Mammary epithelial cell (primary cell): ENCODE measurements at regions of chr1 and their contacts with region 1.

Region 1: GRCh38 chr1:63773815-63774616 is at the start of gene ROR1:
- DNase-seq: peak; percentile 82
- H3K4me3 ChIP-seq: peak within 1 kb of the TSS; percentile 87 to 93 (median 90)
- H3K27ac ChIP-seq: peak within 1 kb of the TSS; percentile 48
- H3K4me1 ChIP-seq: peaks cover 29% of the 10 kb centered on the region
- H3K27me3 ChIP-seq: no peaks in the 10 kb centered on the region
- CTCF ChIP-seq: peak; percentile 23 to 84
- total RNA-seq, gene ROR1: 11.5 to 21.8 TPM

Region 2: DNA sequence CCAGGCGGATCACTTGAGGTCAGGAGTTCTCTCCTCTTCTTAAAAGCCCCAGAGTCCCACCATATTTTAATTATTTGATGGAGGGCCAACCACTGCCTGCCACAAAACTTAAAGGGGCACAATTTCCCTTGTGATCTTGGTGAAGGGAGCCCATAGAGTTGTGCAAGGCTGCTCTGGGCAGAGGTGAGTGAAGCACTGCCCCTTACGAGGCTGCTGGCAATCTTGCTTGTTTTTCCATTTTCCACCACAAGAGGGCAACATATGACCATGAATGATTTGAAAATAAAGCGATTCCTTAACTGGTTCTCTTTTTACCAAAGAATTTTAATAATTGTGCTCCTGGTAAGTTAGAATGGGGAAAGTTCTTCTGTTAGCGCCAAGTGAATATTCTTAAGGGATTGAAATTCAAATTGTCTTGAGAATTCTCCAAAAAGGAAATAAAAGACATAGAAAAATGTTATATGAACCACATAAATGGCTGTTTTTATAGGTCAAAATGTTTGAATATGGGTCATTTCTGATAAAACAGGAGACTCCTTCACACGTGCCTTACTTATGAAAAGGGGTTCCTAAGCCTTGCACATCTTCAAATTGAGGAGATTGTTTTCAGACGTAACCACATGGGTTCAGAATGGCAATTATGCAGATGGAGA is 158.1 kb before region 1 on chr1:
- CTCF ChIA-PET with region 1: no interaction called
- dilution Hi-C with region 1: no loop called
- in situ Hi-C with region 1: no loop called
- intact Hi-C with region 1: loop called (anchors 1 kb)
- DNase-seq: peak; percentile 58
- H3K4me3 ChIP-seq: no peak overlapping the region
- H3K27ac ChIP-seq: no peak overlapping the region
- H3K4me1 ChIP-seq: peaks cover 4% of the 10 kb centered on the region
- H3K27me3 ChIP-seq: no peaks in the 10 kb centered on the region
- CTCF ChIP-seq: peak; percentile 60 to 75

Region 3: DNA sequence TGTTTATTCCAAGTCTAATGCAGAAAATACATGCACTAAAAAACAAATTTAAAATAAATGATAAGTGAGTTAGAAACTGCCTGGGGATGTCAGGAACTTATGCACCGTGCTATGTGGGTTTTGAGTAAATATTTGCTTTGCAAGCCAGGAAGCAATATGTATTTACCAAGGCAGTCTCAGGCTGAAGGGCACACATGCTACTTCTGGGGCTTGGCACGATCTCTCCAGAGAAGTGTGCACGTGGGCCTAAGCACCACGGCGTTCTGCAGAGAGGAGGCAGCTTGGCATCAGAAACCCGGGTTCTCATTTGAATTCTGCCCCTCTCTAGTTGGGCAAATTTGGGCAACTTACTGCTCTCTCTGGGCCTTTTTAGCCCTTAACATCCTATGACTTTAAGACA is 72.8 kb before region 1 on chr1:
- CTCF ChIA-PET with region 1: no interaction called
- dilution Hi-C with region 1: no loop called
- in situ Hi-C with region 1: no loop called
- intact Hi-C with region 1: no loop called
- DNase-seq: no peak
- H3K4me3 ChIP-seq: no peak overlapping the region
- H3K27ac ChIP-seq: no peak overlapping the region
- H3K4me1 ChIP-seq: peaks cover 8% of the 10 kb centered on the region
- H3K27me3 ChIP-seq: no peaks in the 10 kb centered on the region
- CTCF ChIP-seq: no peak

Region 4: DNA sequence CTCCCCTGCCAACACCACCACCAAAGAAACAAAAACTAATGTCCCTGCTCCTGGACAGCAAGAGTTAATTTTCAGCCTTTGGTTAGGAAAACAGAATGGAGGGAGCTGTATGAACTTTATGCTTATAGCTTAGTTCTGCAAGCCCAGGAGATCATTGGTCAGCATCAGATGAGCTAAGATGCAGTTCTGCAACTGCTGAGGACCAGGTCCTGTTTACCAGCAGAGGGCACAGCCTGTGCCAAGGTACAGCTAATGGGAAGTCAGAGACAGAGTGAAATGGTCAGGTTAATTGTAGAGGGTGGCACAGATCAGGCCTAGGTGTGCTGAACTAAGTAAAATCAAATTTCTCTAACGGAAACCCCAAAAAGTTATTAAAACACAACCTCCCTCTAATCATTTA is 161.1 kb after region 1 on chr1:
- CTCF ChIA-PET with region 1: no interaction called
- dilution Hi-C with region 1: no loop called
- in situ Hi-C with region 1: loop called in 1 of 2 experiments (anchors 10 kb)
- intact Hi-C with region 1: no loop called
- DNase-seq: peak; percentile 40
- H3K4me3 ChIP-seq: no peak overlapping the region
- H3K27ac ChIP-seq: no peak overlapping the region
- H3K4me1 ChIP-seq: no peaks in the 10 kb centered on the region
- H3K27me3 ChIP-seq: no peaks in the 10 kb centered on the region
- CTCF ChIP-seq: peak; percentile 36 to 81

Region 5: GRCh38 chr1:64163970-64164369 is 390.0 kb after region 1 on chr1:
- CTCF ChIA-PET with region 1: no interaction called
- dilution Hi-C with region 1: no loop called
- in situ Hi-C with region 1: no loop called
- intact Hi-C with region 1: loop called (anchors 1 kb)
- DNase-seq: peak; percentile 26
- H3K4me3 ChIP-seq: no peak overlapping the region
- H3K27ac ChIP-seq: no peak overlapping the region
- H3K4me1 ChIP-seq: no peaks in the 10 kb centered on the region
- H3K27me3 ChIP-seq: no peaks in the 10 kb centered on the region
- CTCF ChIP-seq: peak; percentile 24 to 61